Activated CD8-positive, alpha-beta T cell treated with anti-CD3 and anti-CD28 coated beads, Interleukin-2, amount 10 ng/mL, durations not matched to agents 7 days and 5 days (primary cell): ENCODE measurements at regions of chr10 and their contacts with region 1.

Region 1: DNA sequence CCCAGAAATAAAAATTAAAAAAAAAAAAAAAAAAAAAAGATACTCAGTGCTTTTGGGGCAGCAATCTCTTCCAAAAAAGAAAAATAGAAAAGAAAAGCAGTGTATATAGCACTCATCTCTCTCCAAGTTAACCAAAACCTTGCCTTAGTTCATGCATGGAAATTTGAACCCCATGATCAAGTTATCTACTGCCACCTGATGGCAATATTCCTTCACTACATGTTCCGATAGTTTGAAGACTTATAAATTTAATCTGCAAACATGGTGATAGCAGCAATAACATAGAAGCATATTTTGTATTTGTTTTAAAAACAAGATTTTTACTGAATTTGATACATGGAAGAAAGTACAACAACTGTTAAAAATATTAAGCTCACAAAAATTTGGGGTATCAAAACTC is 48.6 kb upstream of the SLIT1 start:
- DNase-seq: no peak
- ATAC-seq: peak; percentile 33
- H3K4me3 Mint-ChIP-seq: no peak overlapping the region
- H3K27ac Mint-ChIP-seq: no peak overlapping the region
- H3K4me1 Mint-ChIP-seq: peaks cover 3% of the 10 kb centered on the region
- H3K27me3 Mint-ChIP-seq: no peaks in the 10 kb centered on the region

Region 2: GRCh38 chr10:97217299-97217698 is 17.1 kb before region 1 on chr10:
- CTCF ChIA-PET with region 1: interaction called, 27 read pairs
- POLR2A ChIA-PET with region 1: interaction called, 3 read pairs
- DNase-seq: no peak
- ATAC-seq: no peak
- H3K4me3 Mint-ChIP-seq: no peak overlapping the region
- H3K27ac Mint-ChIP-seq: no peak overlapping the region
- H3K4me1 Mint-ChIP-seq: peaks cover 29% of the 10 kb centered on the region
- H3K27me3 Mint-ChIP-seq: no peaks in the 10 kb centered on the region

Region 3: GRCh38 chr10:97222326-97222961 is 12.0 kb before region 1 on chr10:
- CTCF ChIA-PET with region 1: interaction called, 27 read pairs
- POLR2A ChIA-PET with region 1: interaction called, 3 read pairs
- DNase-seq: no peak
- ATAC-seq: no peak
- H3K4me3 Mint-ChIP-seq: no peak overlapping the region
- H3K27ac Mint-ChIP-seq: no peak overlapping the region
- H3K4me1 Mint-ChIP-seq: peaks cover 34% of the 10 kb centered on the region
- H3K27me3 Mint-ChIP-seq: no peaks in the 10 kb centered on the region